IMR-90 (cell line): ENCODE measurements at regions of chr10 and their contacts with region 1.

Region 1: DNA sequence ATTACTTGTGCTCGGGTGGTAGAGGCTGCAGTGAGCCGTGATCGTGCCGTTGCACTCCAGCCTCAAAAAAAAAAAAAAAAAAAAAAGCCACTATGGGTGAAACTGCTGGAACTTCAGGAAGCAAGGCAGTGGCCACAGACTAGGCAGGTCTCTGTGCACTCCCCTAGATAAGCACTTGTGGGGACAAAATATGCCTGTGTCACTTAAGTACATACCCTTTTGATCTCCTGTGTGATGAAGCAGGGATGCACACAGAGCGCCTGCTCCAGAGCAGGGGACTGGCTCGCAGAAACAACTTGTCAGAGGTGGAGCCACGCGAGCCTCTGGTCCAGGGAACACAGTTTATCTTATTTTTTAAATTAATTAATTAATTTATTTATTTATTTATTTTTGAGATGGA is 42.9 kb upstream of the PSAP start:
- DNase-seq: no peak
- ATAC-seq: no peak
- H3K4me3 ChIP-seq: no peak overlapping the region
- H3K27ac ChIP-seq: no peak overlapping the region
- H3K4me1 ChIP-seq: peaks cover 4% of the 10 kb centered on the region; the same call in 1 of the 2 replicates
- H3K27me3 ChIP-seq: 0 out of 2 replicates have a peak, but pooled peaks cover 2% of the 10 kb centered on the region
- CTCF ChIP-seq: no peak
- POLR2A ChIP-seq: no peak
- RAD21 ChIP-seq: no peak

Region 2: DNA sequence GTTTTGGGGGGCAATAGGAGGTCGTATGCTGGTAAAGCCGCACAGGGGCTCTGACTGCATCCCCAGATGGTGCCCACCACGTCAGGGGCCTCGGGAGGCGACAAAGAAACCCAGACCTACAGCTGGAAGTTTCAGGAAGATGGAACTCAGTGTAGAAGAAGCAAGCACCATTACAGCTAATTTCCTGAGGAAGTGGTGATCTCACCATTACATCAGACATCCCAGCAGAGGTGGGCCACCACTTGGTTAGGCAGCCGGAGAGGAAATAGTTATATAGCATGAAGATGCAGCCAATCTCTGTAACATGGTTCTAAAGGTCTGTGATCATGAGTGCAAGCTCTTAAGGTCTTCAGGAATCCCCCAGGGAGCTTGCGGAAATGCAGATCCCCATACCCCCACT is 878.2 kb before region 1 on chr10:
- CTCF ChIA-PET with region 1: no interaction called
- POLR2A ChIA-PET with region 1: no interaction called
- dilution Hi-C with region 1: no loop called
- in situ Hi-C with region 1: no loop called
- intact Hi-C with region 1: no loop called
- DNase-seq: no peak
- ATAC-seq: no peak
- H3K4me3 ChIP-seq: no peak overlapping the region
- H3K27ac ChIP-seq: no peak overlapping the region
- H3K4me1 ChIP-seq: no peaks in the 10 kb centered on the region
- H3K27me3 ChIP-seq: peaks cover 26% of the 10 kb centered on the region
- CTCF ChIP-seq: no peak
- POLR2A ChIP-seq: no peak
- RAD21 ChIP-seq: no peak

Region 3: DNA sequence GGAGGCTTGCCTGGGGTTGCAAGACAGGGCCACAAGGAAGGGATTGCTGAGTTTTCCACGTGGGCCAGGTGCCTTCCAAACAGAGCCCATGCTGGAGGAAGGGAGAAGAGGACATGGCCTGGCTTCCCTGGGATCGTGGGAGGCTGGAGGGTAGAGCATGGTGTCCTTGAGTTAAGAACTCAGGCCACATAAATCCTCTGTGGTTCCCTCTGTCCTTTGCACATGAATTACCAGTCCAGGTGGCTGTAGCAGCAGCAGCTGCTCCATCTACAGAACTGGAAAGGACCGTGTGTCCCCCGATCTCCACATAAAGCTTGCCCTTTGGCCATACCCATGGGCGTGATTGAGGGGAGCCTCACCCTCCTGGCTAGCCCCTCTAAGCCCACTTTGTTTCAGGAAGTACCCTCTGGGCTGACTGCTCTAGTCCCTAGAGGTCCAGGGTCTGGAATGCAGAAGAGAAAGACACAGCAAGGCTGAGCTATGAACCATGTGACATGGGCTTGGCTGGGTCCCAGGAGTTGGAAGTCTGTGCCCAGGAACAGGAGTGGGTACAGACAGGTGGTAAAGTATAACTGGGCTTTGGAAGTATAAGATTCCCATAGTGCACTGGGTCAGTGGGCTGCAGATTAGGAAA is 259.3 kb before region 1 on chr10:
- CTCF ChIA-PET with region 1: no interaction called
- POLR2A ChIA-PET with region 1: no interaction called
- dilution Hi-C with region 1: no loop called
- in situ Hi-C with region 1: no loop called
- intact Hi-C with region 1: no loop called
- DNase-seq: no peak
- ATAC-seq: no peak
- H3K4me3 ChIP-seq: no peak overlapping the region
- H3K27ac ChIP-seq: no peak overlapping the region
- H3K4me1 ChIP-seq: no peaks in the 10 kb centered on the region
- H3K27me3 ChIP-seq: peaks cover 66% of the 10 kb centered on the region
- CTCF ChIP-seq: no peak
- POLR2A ChIP-seq: no peak
- RAD21 ChIP-seq: no peak

Region 4: GRCh38 chr10:71829171-71829570 is 64.7 kb before region 1 on chr10:
- CTCF ChIA-PET with region 1: interaction called, 5 read pairs
- POLR2A ChIA-PET with region 1: interaction called, 14 read pairs
- dilution Hi-C with region 1: no loop called
- in situ Hi-C with region 1: no loop called
- intact Hi-C with region 1: no loop called
- DNase-seq: no peak
- ATAC-seq: no peak
- H3K4me3 ChIP-seq: no peak overlapping the region
- H3K27ac ChIP-seq: no peak overlapping the region
- H3K4me1 ChIP-seq: peaks cover 4% of the 10 kb centered on the region; the same call in 1 of the 2 replicates
- H3K27me3 ChIP-seq: no peaks in the 10 kb centered on the region
- CTCF ChIP-seq: no peak
- POLR2A ChIP-seq: no peak
- RAD21 ChIP-seq: no peak

Region 5: DNA sequence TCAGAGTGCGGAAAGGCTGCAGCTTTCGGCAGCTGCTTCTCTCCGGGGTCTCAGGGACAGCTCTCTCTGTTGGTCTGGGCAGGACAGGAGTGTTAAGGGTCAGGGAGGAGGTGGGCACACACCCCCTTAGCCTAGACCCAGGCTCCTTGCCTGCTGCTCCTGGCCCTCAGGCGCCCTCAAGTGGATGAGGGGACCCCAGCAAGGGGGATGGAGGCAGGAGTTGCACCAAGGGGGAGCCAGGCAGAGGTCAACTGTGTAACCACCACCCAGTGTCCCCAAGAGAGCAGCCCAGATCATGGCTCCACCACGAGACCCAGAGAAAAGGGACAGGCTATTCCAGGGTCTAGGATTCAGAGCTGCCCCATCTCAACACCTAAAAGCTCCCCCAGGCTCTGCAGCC is 167.6 kb after region 1 on chr10:
- CTCF ChIA-PET with region 1: no interaction called
- POLR2A ChIA-PET with region 1: no interaction called
- dilution Hi-C with region 1: no loop called
- in situ Hi-C with region 1: no loop called
- intact Hi-C with region 1: no loop called
- DNase-seq: no peak
- ATAC-seq: 0 out of 2 replicates have a peak, but pooled peaks have one; percentile 29
- H3K4me3 ChIP-seq: no peak overlapping the region
- H3K27ac ChIP-seq: no peak overlapping the region
- H3K4me1 ChIP-seq: no peaks in the 10 kb centered on the region
- H3K27me3 ChIP-seq: peaks cover 40% of the 10 kb centered on the region
- CTCF ChIP-seq: peak; percentile 21; the same call in 1 of the 2 replicates
- POLR2A ChIP-seq: no peak
- RAD21 ChIP-seq: no peak

Region 6: GRCh38 chr10:72223743-72224101 is 329.8 kb after region 1 on chr10:
- CTCF ChIA-PET with region 1: interaction called, 7 read pairs
- POLR2A ChIA-PET with region 1: no interaction called
- dilution Hi-C with region 1: no loop called
- in situ Hi-C with region 1: no loop called
- intact Hi-C with region 1: loop called (anchors 1 kb)
- DNase-seq: peak; percentile 45
- ATAC-seq: no peak
- H3K4me3 ChIP-seq: no peak overlapping the region
- H3K27ac ChIP-seq: no peak overlapping the region; the same call in 1 of the 2 replicates
- H3K4me1 ChIP-seq: peaks cover 3% of the 10 kb centered on the region; the same call in 1 of the 2 replicates
- H3K27me3 ChIP-seq: no peaks in the 10 kb centered on the region
- CTCF ChIP-seq: no peak
- POLR2A ChIP-seq: no peak
- RAD21 ChIP-seq: no peak